Activated CD8-positive, alpha-beta memory T cell treated with anti-CD3 and anti-CD28 coated beads, Interleukin-2, amount 10 ng/mL, durations not matched to agents 7 days and 5 days (primary cell): ENCODE measurements at regions of chr17 and their contacts with region 1.

Region 1: GRCh38 chr17:48816774-48817590 is at the start of gene TTLL6:
- DNase-seq: peak; percentile 84
- ATAC-seq: peak; percentile 98
- H3K4me3 Mint-ChIP-seq: peak within 1 kb of the TSS; percentile 61
- H3K27ac Mint-ChIP-seq: no peak within 1 kb of the TSS
- H3K4me1 Mint-ChIP-seq: peaks cover 24% of the 10 kb centered on the region
- H3K27me3 Mint-ChIP-seq: peaks cover 62% of the 10 kb centered on the region
- total RNA-seq, gene TTLL6: not detected

Region 2: GRCh38 chr17:48836004-48836403 is 19.0 kb after region 1 on chr17:
- CTCF ChIA-PET with region 1: interaction called, 13 read pairs
- DNase-seq: no peak
- ATAC-seq: no peak
- H3K4me3 Mint-ChIP-seq: peak overlapping the region; percentile 6
- H3K27ac Mint-ChIP-seq: peak overlapping the region; percentile 61
- H3K4me1 Mint-ChIP-seq: peaks cover 92% of the 10 kb centered on the region
- H3K27me3 Mint-ChIP-seq: no peaks in the 10 kb centered on the region